ENCODE measurements at regions of chr5 and their contacts with region 1.

Region 1: GRCh38 chr5:134411546-134412266 is at the start of gene CDKN2AIPNL:
- DNase-seq: peak; percentile 87
- H3K4me3 Mint-ChIP-seq: peak within 1 kb of the TSS; percentile 97
- H3K27ac Mint-ChIP-seq: peak within 1 kb of the TSS; percentile 90
- H3K4me1 Mint-ChIP-seq: peaks cover 26% of the 10 kb centered on the region
- H3K27me3 Mint-ChIP-seq: no peaks in the 10 kb centered on the region
- total RNA-seq, gene CDKN2AIPNL: 33.6 and 35.6 TPM in 2 replicates

Region 2: DNA sequence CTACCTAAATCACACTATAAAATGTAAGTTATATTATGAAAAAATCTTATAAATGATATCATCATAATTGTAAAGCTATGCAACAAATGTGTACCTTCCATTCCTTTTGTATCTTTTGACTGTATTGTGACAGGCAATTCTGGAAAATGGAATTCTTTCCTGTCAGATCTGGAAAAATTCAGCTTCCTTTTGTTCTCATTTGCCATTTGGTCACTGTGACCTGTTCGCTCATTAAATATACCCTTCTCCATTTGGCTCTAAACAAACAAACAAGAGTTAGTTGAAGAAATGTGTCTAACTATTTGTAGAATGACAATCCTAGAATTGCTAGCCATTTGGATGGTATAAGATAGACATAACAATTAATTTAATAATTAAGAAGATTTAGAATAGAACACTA is 107.4 kb before region 1 on chr5:
- intact Hi-C with region 1: loop called (anchors 2 kb)
- DNase-seq: no peak
- H3K4me3 Mint-ChIP-seq: no peak overlapping the region
- H3K27ac Mint-ChIP-seq: no peak overlapping the region
- H3K4me1 Mint-ChIP-seq: no peaks in the 10 kb centered on the region
- H3K27me3 Mint-ChIP-seq: peaks cover 2% of the 10 kb centered on the region

Region 3: GRCh38 chr5:134436523-134437339 is 25.0 kb after region 1 on chr5:
- intact Hi-C with region 1: loop called (anchors 1 kb)
- DNase-seq: peak; percentile 51
- H3K4me3 Mint-ChIP-seq: peak overlapping the region; percentile 10
- H3K27ac Mint-ChIP-seq: peak overlapping the region; percentile 77
- H3K4me1 Mint-ChIP-seq: peaks cover 26% of the 10 kb centered on the region
- H3K27me3 Mint-ChIP-seq: peaks cover 2% of the 10 kb centered on the region

Region 4: DNA sequence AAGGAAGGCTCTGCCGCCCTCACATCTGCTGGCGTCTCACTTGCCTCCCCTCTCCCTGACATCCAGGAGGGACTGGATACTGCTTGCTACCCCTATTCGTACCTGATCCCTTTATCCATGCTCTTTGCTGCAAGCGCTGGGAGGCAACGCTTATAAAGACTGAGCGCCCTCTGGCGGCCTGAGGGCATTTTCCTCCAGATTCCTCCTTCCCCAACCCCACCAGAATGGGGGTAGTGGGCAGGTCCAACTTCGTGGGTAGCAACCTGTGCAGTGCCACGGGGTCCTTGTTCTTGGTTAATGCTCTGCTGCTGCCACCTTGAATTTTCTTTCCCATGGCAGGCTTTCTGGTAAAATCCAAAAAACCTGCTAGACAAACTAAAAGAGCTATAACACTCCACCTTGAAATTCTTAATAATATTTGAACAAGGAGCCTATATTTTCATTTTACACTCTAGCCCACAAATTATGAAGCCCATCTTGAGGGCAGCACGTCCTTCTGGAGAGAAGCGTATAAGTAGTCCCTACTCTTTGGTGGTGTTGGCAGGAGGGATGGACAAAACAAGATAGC is 166.2 kb after region 1 on chr5:
- intact Hi-C with region 1: loop called (anchors 1 kb)
- DNase-seq: peak; percentile 62
- H3K4me3 Mint-ChIP-seq: no peak overlapping the region
- H3K27ac Mint-ChIP-seq: peak overlapping the region; percentile 6
- H3K4me1 Mint-ChIP-seq: no peaks in the 10 kb centered on the region
- H3K27me3 Mint-ChIP-seq: no peaks in the 10 kb centered on the region

Measured in activated T-helper 1 cell treated with anti-CD3 and anti-CD28 coated beads, Interleukin-12 subunit alpha, Interleukin-12 subunit beta, Interleukin-2, Interleukin-4 antibody, amounts not matched to agents 30 ng/mL and 10 ng/mL and 1 ng/mL, durations not matched to agents 14 hours and 24 hours and 36 hours (primary cell).